Esophagus muscularis mucosa (tissue), 4 donors: ENCODE measurements at regions of chr7 and their contacts with region 1.

Region 1: DNA sequence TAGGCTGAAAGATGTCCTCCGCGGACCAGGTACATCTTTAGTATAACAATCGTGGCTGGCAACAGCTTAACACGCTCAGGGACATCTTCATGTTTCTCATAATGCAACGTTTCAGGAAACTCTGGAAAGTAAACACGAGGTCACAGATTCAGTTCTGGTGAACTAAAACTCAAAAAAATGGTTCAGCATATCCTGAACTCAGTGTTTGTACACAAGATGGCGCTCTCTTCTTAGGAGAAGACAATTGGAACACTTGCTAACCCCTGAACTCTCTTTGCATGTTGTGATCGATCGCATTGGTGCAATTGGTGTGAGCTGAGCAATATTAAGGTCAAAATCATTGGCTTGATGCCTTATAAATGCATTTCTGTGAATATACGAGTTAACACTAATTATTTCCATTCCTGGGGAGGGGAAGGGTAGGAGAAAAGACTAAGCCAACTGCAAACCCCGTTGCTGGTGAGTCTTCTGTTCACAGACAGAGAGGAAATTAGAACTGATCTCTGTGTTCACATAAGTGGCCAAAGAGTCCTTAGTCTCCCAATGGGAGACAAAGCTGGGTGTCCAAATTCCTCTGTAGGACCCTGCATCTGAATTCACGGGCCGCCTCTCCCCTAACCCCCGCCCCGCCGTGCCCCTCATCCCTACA is 52.6 kb upstream of the FAM180A start:
- DNase-seq: no peak
- H3K4me3 ChIP-seq: no peak overlapping the region
- H3K27ac ChIP-seq: no peak overlapping the region
- H3K4me1 ChIP-seq: peaks cover 2 to 21% (median 15%) of the 10 kb centered on the region in 4 donors
- H3K27me3 ChIP-seq: no peaks in the 10 kb centered on the region
- CTCF ChIP-seq: peak; percentile 66 to 75 (median 71)
- EP300 ChIP-seq: no peak
- POLR2A ChIP-seq: no peak

Region 2: DNA sequence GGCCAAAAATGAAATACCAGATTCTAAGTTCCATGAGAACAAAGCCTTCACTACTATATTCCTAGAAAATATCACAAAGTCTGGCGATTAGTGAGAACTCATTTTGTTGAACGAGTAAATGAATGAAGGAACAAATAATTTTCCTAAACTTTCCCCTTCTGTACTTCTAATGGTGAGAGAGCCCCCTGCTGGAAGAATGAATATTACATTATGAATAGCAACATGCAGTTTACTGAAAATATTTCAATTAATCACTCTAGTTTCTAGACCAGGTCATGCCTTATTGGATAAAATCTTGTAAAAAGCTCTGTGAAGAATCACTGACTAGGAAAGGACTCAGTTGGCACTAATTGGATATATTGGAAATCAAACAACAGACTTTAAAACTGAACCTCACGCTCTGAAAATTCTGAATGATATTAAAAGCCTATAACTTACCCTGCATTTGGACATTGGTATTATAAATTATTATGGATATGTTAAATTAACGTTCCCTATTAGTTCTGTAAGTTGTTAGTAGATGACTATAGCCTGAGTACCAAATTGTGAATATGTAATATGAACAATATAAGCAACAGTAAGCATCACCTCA is 208.4 kb after region 1 on chr7:
- intact Hi-C with region 1: loop called (anchors 1 kb)
- DNase-seq: no peak
- H3K4me3 ChIP-seq: no peak overlapping the region
- H3K27ac ChIP-seq: no peak overlapping the region
- H3K4me1 ChIP-seq: peaks cover 0 to 5% (median 2%) of the 10 kb centered on the region in 4 donors
- H3K27me3 ChIP-seq: no peaks in the 10 kb centered on the region
- CTCF ChIP-seq: peak; percentile 70 to 74 (median 73)
- EP300 ChIP-seq: no peak
- POLR2A ChIP-seq: no peak